GM12878 (cell line): ENCODE measurements at regions of chr1 and their contacts with region 1.

Region 1: GRCh38 chr1:207355060-207355459 is 33.6 kb downstream of the CD55 start:
- DNase-seq: no peak
- ATAC-seq: peak; percentile 91
- H3K4me3 ChIP-seq: no peak overlapping the region
- H3K27ac ChIP-seq: no peak overlapping the region
- H3K4me1 ChIP-seq: no peaks in the 10 kb centered on the region
- H3K27me3 ChIP-seq: no peaks in the 10 kb centered on the region
- CTCF ChIP-seq: no peak
- EP300 ChIP-seq: no peak
- POLR2A ChIP-seq: no peak
- RAD21 ChIP-seq: no peak

Region 2: GRCh38 chr1:206967096-206967849 is 387.8 kb before region 1 on chr1:
- CTCF ChIA-PET with region 1: no interaction called
- POLR2A ChIA-PET with region 1: no interaction called
- RAD21 ChIA-PET with region 1: no interaction called
- SMC1A ChIA-PET with region 1: no interaction called
- in situ Hi-C with region 1: no loop called
- intact Hi-C with region 1: no loop called
- DNase-seq: peak; percentile 72
- ATAC-seq: peak; percentile 72
- H3K4me3 ChIP-seq: 0 out of 2 replicates have a peak overlapping the region, but pooled peaks have one; percentile 37
- H3K27ac ChIP-seq: peak overlapping the region; percentile 52
- H3K4me1 ChIP-seq: peaks cover 38% of the 10 kb centered on the region
- H3K27me3 ChIP-seq: no peaks in the 10 kb centered on the region
- CTCF ChIP-seq: no peak
- EP300 ChIP-seq: 0 out of 4 replicates have a peak, but pooled peaks of 1 of the 2 experiments have one; percentile 32
- POLR2A ChIP-seq: no peak
- RAD21 ChIP-seq: no peak

Region 3: GRCh38 chr1:207336559-207337467 is 18.2 kb before region 1 on chr1:
- CTCF ChIA-PET with region 1: interaction called, 12 read pairs
- POLR2A ChIA-PET with region 1: interaction called, 15 read pairs
- RAD21 ChIA-PET with region 1: interaction called, 17 read pairs
- SMC1A ChIA-PET with region 1: interaction called, 41 read pairs
- in situ Hi-C with region 1: no loop called
- intact Hi-C with region 1: no loop called
- DNase-seq: peak; percentile 91
- ATAC-seq: peak; percentile 78
- H3K4me3 ChIP-seq: peak overlapping the region; percentile 1; the same call in 1 of the 2 replicates
- H3K27ac ChIP-seq: peak overlapping the region; percentile 81
- H3K4me1 ChIP-seq: peaks cover 47% of the 10 kb centered on the region
- H3K27me3 ChIP-seq: no peaks in the 10 kb centered on the region
- CTCF ChIP-seq: no peak
- EP300 ChIP-seq: peak; percentile 72 to 89; a peak in 3 of 4 replicates
- POLR2A ChIP-seq: no peak
- RAD21 ChIP-seq: no peak

Region 4: DNA sequence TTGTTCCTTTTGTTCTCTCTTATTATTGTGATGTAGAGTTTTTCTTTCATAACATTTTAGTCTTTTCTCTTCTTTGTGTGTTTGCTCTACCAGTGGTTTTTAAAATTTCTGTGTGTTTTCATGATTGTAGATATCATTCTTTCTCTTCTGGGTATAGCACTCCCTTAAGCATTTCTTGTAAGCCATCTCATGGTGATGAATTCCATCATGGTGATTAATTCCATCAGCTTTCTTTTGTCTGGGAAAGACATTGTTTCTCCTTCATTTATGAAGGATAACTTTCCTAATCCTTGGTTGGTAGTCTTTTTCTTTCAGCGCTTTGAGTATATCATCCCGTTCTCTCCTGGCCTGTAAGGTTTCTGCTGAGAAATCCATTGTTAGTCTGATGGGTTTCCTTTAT is 10.8 kb before region 1 on chr1:
- CTCF ChIA-PET with region 1: no interaction called
- POLR2A ChIA-PET with region 1: no interaction called
- RAD21 ChIA-PET with region 1: interaction called, 3 read pairs
- SMC1A ChIA-PET with region 1: interaction called, 10 read pairs
- in situ Hi-C with region 1: no loop called
- intact Hi-C with region 1: no loop called
- DNase-seq: no peak
- ATAC-seq: no peak
- H3K4me3 ChIP-seq: no peak overlapping the region
- H3K27ac ChIP-seq: no peak overlapping the region
- H3K4me1 ChIP-seq: peaks cover 8% of the 10 kb centered on the region
- H3K27me3 ChIP-seq: no peaks in the 10 kb centered on the region
- CTCF ChIP-seq: no peak
- EP300 ChIP-seq: no peak
- POLR2A ChIP-seq: no peak
- RAD21 ChIP-seq: no peak